K562 (cell line): ENCODE measurements at regions of chr16 and their contacts with region 1.

Region 1: GRCh38 chr16:84864326-84864955 is 44.7 kb downstream of the CRISPLD2 start:
- DNase-seq: no peak
- ATAC-seq: peak; percentile 37; the same call in 2 of the 3 replicates
- H3K4me3 ChIP-seq: no peak overlapping the region
- H3K27ac ChIP-seq: no peak overlapping the region
- H3K4me1 ChIP-seq: peaks cover 0 to 3% of the 10 kb centered on the region in 2 experiments; a peak in 2 of 5 replicates
- H3K27me3 ChIP-seq: peaks cover 70 to 86% of the 10 kb centered on the region in 2 experiments
- CTCF ChIP-seq: no peak
- EP300 ChIP-seq: no peak
- POLR2A ChIP-seq: no peak
- RAD21 ChIP-seq: no peak

Region 2: GRCh38 chr16:84881702-84882521 is 17.5 kb after region 1 on chr16:
- CTCF ChIA-PET with region 1: no interaction called
- POLR2A ChIA-PET with region 1: interaction called, 12 read pairs
- in situ Hi-C with region 1: no loop called
- intact Hi-C with region 1: no loop called
- DNase-seq: peak; percentile 72 to 89 (median 78)
- ATAC-seq: peak; percentile 76
- H3K4me3 ChIP-seq: no peak overlapping the region
- H3K27ac ChIP-seq: peak overlapping the region; percentile 24; the same call in 1 of the 3 replicates
- H3K4me1 ChIP-seq: peaks cover 52 to 61% of the 10 kb centered on the region in 2 experiments
- H3K27me3 ChIP-seq: no peaks in the 10 kb centered on the region
- CTCF ChIP-seq: no peak
- EP300 ChIP-seq: peak; percentile 64; the same call in 1 of the 2 replicates
- POLR2A ChIP-seq: no peak
- RAD21 ChIP-seq: no peak